HEK293T (cell line): ENCODE measurements at regions of chr4 and their contacts with region 1.

Region 1: GRCh38 chr4:77862478-77863216 is at the start of gene MRPL1:
- DNase-seq: peak; percentile 80

Region 2: DNA sequence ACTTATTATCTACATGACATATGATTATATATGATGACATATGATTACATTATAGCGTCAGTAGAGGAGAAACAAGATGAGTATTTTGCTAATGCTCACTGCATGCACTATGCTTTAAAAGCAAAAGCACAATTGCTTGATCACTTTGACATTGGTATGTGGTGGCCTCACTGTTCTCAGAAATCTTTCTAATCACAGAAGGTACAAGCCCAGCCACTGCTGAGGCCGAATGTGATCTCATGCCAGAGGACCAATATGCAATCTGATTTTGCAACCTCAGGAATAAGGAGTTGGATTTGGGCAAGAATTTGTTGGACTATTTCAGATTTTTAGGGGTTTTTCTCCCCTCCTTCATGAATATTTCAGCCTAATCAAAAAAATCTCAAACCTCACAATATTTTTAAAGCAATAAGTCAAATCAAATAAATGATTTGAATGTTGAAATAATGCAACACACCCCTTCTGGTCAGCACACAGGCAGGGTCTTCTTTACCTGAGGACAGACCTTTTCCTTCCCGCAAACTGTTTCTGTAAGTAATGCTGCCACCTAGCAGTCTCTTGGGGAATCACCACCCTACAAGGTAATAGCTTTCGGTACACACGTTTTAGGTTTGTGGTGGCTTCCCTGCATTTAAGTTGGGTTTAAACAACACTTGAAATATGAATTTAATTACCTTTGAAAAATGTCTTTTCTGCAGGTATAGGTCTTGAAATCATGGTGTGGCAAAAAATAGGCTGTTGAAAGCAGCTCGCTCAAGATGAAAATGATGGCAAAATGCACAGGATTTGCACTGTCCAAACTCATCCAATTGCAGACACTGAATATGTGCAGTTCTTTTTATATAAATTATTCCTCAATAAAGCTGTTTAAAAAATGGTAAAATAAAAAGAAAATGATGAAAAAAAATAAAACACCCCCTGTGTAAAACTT is 261.9 kb before region 1 on chr4:
- CTCF ChIA-PET with region 1: no interaction called
- POLR2A ChIA-PET with region 1: no interaction called
- DNase-seq: peak; percentile 59

Region 3: DNA sequence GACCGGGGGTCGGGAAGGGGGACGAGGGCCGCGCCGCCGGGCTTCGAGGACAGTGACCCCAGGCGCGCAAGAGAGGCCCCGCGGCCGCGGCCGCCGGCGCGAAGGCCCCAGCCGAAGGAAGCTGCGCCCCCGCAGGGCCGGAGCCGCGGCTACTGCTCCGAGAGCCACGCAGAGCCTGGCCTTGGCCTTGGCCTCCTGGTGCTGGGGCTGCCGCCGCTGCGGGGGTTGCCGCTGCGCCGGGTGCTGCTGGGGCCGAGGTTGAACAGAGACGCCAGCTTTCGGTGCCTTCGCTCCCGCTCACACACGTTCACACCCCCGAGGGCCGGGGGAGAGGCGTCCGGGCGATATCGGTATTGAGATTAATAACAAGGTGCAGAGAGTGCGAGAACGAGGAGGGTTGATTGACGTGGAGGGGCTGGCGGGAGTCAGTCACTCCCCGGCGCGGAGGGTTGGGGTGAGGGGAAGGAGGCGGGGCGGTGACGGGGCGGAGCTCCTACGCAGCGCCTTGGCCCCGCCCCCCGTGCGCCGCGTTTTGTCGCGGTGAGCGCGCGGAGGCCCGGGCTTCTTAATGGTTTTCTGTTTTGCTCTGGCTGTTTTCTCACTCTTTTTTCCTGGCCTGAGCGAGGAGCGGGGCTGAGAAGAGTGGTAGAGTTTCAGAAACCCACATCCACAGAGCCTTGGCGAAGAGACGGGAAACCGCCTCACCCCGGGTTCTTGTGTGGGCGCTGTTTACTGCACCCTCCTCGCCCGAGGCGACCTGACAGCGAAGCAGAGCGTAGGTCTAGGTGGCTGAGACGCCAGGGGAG is 42.6 kb before region 1 on chr4:
- CTCF ChIA-PET with region 1: interaction called, 3 read pairs
- POLR2A ChIA-PET with region 1: interaction called, 23 read pairs
- DNase-seq: peak; percentile 86

Region 4: DNA sequence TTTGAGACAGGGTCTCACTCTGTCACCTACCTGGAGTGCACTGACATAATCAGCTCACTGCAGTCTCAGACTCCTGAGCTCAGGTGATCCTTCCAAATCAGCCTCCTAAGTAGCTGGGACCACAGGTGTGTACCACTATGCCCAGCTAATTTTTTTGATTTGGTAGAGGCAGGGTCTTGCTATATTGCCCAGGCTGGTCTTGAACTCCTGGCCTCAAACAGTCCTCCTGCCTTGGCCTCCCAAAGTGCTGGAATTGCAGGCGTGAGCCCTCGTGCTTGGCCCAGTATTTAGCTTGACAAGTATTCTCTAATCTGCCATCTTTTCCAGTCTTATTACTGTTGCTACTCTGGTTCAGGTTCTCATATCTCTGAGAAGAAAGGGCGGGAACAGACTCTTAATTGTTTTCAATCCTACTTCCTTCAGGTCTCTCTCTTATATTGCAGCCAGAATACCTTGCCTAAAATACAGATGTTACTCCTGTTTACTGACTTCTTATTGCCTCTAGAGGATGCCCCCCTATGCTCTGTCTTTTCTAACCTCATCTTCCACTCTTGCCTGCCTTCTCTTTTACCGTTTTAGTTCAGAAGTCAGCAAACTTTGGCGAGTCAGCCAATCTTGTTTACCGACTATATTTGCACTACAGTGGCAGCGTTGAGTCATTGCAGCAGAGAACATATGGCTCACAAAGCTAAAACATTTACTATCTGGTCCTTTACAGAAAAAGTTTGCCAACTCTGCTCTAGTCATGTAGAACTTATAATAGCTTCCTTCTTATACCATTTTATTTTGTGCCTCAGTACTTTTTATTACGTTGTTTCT is 19.0 kb after region 1 on chr4:
- CTCF ChIA-PET with region 1: no interaction called
- POLR2A ChIA-PET with region 1: interaction called, 10 read pairs
- DNase-seq: no peak